ENCODE measurements at regions of chr3 and their contacts with region 1.

Region 1: GRCh38 chr3:23389089-23389488 is 186.0 kb downstream of the UBE2E2 start:
- DNase-seq: no peak
- ATAC-seq: no peak
- H3K4me3 ChIP-seq: no peak overlapping the region
- H3K4me3 Mint-ChIP-seq: peak overlapping the region; percentile 9
- H3K27ac ChIP-seq: no peak overlapping the region
- H3K27ac Mint-ChIP-seq: no peak overlapping the region
- H3K4me1 ChIP-seq: peaks cover 30 to 55% of the 10 kb centered on the region in 2 donors
- H3K4me1 Mint-ChIP-seq: peaks cover 67% of the 10 kb centered on the region
- H3K27me3 ChIP-seq: no peaks in the 10 kb centered on the region
- H3K27me3 Mint-ChIP-seq: no peaks in the 10 kb centered on the region
- CTCF ChIP-seq: no peak

Region 2: GRCh38 chr3:23189187-23189586 is 199.9 kb before region 1 on chr3:
- CTCF ChIA-PET with region 1: no interaction called
- POLR2A ChIA-PET with region 1: no interaction called
- intact Hi-C with region 1: no loop called
- DNase-seq: no peak
- ATAC-seq: no peak
- H3K4me3 ChIP-seq: no peak overlapping the region
- H3K4me3 Mint-ChIP-seq: no peak overlapping the region
- H3K27ac ChIP-seq: no peak overlapping the region
- H3K27ac Mint-ChIP-seq: no peak overlapping the region
- H3K4me1 ChIP-seq: no peaks in the 10 kb centered on the region
- H3K4me1 Mint-ChIP-seq: peaks cover 6% of the 10 kb centered on the region
- H3K27me3 ChIP-seq: no peaks in the 10 kb centered on the region
- H3K27me3 Mint-ChIP-seq: peaks cover 9% of the 10 kb centered on the region
- CTCF ChIP-seq: no peak

Region 3: DNA sequence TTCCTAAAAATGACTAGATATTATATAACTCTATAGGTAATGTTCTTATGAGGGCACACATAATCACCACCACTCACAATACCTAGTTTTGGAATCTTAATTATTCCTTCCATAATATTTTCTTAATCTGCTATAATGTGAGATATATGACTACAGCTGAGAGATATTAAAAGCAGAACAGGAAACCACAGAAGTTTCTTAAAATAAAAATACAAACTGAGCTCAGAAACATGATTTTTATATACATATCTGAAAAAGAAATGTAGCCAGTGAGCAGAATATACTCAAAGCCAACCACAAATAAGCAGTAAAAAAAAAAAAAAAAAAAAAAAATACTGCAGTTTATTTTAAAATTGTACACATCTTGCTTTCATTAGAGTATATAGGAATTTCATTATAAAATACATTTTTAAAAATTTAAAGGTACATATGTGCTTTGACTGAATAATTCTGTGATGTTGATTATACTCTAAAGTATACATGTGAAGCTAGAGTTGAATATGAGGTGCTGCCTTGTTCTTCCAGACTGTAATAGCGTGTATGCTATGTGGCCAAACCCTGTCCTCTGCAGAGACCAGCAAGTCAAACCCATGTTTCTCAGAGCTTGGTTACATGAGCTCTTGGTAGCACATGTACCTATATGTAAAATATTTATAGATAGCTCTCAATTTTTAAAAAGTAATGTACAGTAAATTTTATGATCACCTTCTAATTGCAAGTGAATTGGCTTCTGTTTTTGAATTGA is 11.0 kb before region 1 on chr3:
- CTCF ChIA-PET with region 1: no interaction called
- POLR2A ChIA-PET with region 1: no interaction called
- intact Hi-C with region 1: loop called (anchors 2 kb)
- DNase-seq: no peak
- ATAC-seq: no peak
- H3K4me3 ChIP-seq: peak overlapping the region in 1 of 5 experiments; percentile 38
- H3K4me3 Mint-ChIP-seq: peak overlapping the region; percentile 58
- H3K27ac ChIP-seq: peak overlapping the region in 1 of 2 donors; percentile 66
- H3K27ac Mint-ChIP-seq: peak overlapping the region; percentile 57
- H3K4me1 ChIP-seq: peaks cover 19 to 27% of the 10 kb centered on the region in 2 donors
- H3K4me1 Mint-ChIP-seq: peaks cover 53% of the 10 kb centered on the region
- H3K27me3 ChIP-seq: no peaks in the 10 kb centered on the region
- H3K27me3 Mint-ChIP-seq: no peaks in the 10 kb centered on the region
- CTCF ChIP-seq: no peak